ENCODE measurements at regions of chr14 and their contacts with region 1.

Region 1: GRCh38 chr14:104677512-104678332 is 11.7 kb upstream of the INF2 start:
- DNase-seq: peak; percentile 25 to 82 (median 50)
- ATAC-seq: peak; percentile 81
- H3K4me3 ChIP-seq: peak overlapping the region; percentile 73
- H3K4me3 Mint-ChIP-seq: peak overlapping the region; percentile 83
- H3K27ac ChIP-seq: no peak overlapping the region
- H3K27ac Mint-ChIP-seq: no peak overlapping the region
- H3K4me1 ChIP-seq: peaks cover 24% of the 10 kb centered on the region
- H3K4me1 Mint-ChIP-seq: peaks cover 11% of the 10 kb centered on the region
- H3K27me3 ChIP-seq: no peaks in the 10 kb centered on the region
- H3K27me3 Mint-ChIP-seq: no peaks in the 10 kb centered on the region
- CTCF ChIP-seq: no peak

Region 2: GRCh38 chr14:104665657-104666522 is 11.8 kb before region 1 on chr14:
- CTCF ChIA-PET with region 1: interaction called, 4 read pairs
- POLR2A ChIA-PET with region 1: interaction called, 10 read pairs
- intact Hi-C with region 1: no loop called
- DNase-seq: peak; percentile 28 to 78 (median 50)
- ATAC-seq: peak; percentile 93
- H3K4me3 ChIP-seq: no peak overlapping the region
- H3K4me3 Mint-ChIP-seq: peak overlapping the region; percentile 25
- H3K27ac ChIP-seq: no peak overlapping the region
- H3K27ac Mint-ChIP-seq: peak overlapping the region; percentile 63
- H3K4me1 ChIP-seq: peaks cover 30% of the 10 kb centered on the region
- H3K4me1 Mint-ChIP-seq: peaks cover 32% of the 10 kb centered on the region
- H3K27me3 ChIP-seq: no peaks in the 10 kb centered on the region
- H3K27me3 Mint-ChIP-seq: peaks cover 6% of the 10 kb centered on the region
- CTCF ChIP-seq: peak; percentile 69

Region 3: GRCh38 chr14:104689109-104689880 is 11.6 kb after region 1 on chr14 and contains the start of gene INF2:
- CTCF ChIA-PET with region 1: no interaction called
- POLR2A ChIA-PET with region 1: interaction called, 17 read pairs
- intact Hi-C with region 1: no loop called
- DNase-seq: peak; percentile 14 to 81 (median 42)
- ATAC-seq: peak; percentile 62
- H3K4me3 ChIP-seq: peak within 1 kb of the TSS; percentile 61
- H3K4me3 Mint-ChIP-seq: peak within 1 kb of the TSS; percentile 89
- H3K27ac ChIP-seq: peak within 1 kb of the TSS in 1 of 2 donors; percentile 29
- H3K27ac Mint-ChIP-seq: no peak within 1 kb of the TSS
- H3K4me1 ChIP-seq: peaks cover 80% of the 10 kb centered on the region
- H3K4me1 Mint-ChIP-seq: peaks cover 51% of the 10 kb centered on the region
- H3K27me3 ChIP-seq: no peaks in the 10 kb centered on the region
- H3K27me3 Mint-ChIP-seq: no peaks in the 10 kb centered on the region
- CTCF ChIP-seq: no peak
- total RNA-seq, gene INF2: 74.9 to 76.9 TPM

Region 4: GRCh38 chr14:104694991-104695659 is 17.4 kb after region 1 on chr14:
- CTCF ChIA-PET with region 1: no interaction called
- POLR2A ChIA-PET with region 1: interaction called, 17 read pairs
- intact Hi-C with region 1: no loop called
- DNase-seq: peak in 13 of 14 experiments; percentile 23 to 82 (median 53)
- ATAC-seq: peak; percentile 77
- H3K4me3 ChIP-seq: peak overlapping the region; percentile 30
- H3K4me3 Mint-ChIP-seq: peak overlapping the region; percentile 74
- H3K27ac ChIP-seq: peak overlapping the region; percentile 57 to 72
- H3K27ac Mint-ChIP-seq: peak overlapping the region; percentile 93
- H3K4me1 ChIP-seq: peaks cover 76% of the 10 kb centered on the region
- H3K4me1 Mint-ChIP-seq: peaks cover 49% of the 10 kb centered on the region
- H3K27me3 ChIP-seq: no peaks in the 10 kb centered on the region
- H3K27me3 Mint-ChIP-seq: no peaks in the 10 kb centered on the region
- CTCF ChIP-seq: no peak

Region 5: DNA sequence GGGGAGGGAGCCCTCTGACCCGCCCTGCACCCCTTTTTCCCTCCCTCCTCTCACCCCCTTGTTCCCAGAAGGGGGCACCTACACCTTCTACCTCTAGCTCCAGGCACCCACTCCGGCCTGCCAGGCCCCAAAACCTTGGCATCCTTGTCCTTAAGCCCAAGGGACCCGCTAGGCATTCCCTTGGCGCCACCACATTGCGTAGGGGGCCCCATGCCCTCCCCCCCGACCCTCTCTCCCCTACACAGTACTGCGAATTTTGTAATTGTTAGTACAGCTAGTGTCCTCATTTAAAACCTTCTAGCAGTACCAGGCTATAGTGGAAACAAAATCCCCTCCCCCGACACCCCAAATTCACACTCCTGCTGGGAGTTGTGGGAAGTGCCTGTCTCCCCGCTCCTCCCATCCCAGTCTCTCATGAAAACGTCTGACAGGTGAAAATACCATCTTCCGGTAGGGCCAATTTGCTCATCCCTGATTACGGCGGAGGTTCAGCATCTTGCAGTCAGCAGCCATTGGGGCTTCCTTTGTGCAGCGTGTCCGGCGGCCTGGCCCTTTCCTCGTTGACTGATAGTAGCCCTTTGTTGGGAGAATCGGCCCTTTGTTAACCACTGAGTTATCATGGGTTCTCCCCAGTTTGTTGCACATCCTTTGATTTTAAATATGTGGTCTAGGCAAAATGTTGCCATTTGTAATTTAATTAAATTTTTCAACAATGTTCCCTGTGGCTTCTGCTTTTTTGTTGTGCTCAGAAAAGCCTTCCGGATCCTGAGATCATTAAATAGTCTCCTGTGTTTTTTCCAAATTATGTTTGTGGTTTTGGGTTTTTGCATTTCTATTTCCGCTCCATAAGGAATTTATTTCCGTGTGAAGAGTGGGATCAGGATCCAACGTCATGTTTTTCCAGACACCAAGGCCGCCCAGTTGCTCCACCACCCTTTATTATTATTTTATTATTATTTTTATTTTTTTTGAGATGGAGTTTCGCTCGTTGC is 179.4 kb after region 1 on chr14:
- CTCF ChIA-PET with region 1: no interaction called
- POLR2A ChIA-PET with region 1: no interaction called
- intact Hi-C with region 1: no loop called
- DNase-seq: no peak
- ATAC-seq: no peak
- H3K4me3 ChIP-seq: no peak overlapping the region
- H3K4me3 Mint-ChIP-seq: no peak overlapping the region
- H3K27ac ChIP-seq: no peak overlapping the region
- H3K27ac Mint-ChIP-seq: no peak overlapping the region
- H3K4me1 ChIP-seq: no peaks in the 10 kb centered on the region
- H3K4me1 Mint-ChIP-seq: no peaks in the 10 kb centered on the region
- H3K27me3 ChIP-seq: peaks cover 0 to 3% of the 10 kb centered on the region in 2 experiments
- H3K27me3 Mint-ChIP-seq: peaks cover 6% of the 10 kb centered on the region
- CTCF ChIP-seq: no peak